GM10248 (cell line): ENCODE measurements at regions of chr12 and their contacts with region 1.

Region 1: GRCh38 chr12:84874125-84874824 is 38.3 kb downstream of the SLC6A15 start:
- DNase-seq: peak; percentile 24
- CTCF ChIP-seq: peak; percentile 70

Region 2: GRCh38 chr12:84862186-84862585 is 12.1 kb before region 1 on chr12:
- CTCF ChIA-PET with region 1: interaction called, 14 read pairs
- POLR2A ChIA-PET with region 1: no interaction called
- DNase-seq: no peak
- CTCF ChIP-seq: no peak

Region 3: DNA sequence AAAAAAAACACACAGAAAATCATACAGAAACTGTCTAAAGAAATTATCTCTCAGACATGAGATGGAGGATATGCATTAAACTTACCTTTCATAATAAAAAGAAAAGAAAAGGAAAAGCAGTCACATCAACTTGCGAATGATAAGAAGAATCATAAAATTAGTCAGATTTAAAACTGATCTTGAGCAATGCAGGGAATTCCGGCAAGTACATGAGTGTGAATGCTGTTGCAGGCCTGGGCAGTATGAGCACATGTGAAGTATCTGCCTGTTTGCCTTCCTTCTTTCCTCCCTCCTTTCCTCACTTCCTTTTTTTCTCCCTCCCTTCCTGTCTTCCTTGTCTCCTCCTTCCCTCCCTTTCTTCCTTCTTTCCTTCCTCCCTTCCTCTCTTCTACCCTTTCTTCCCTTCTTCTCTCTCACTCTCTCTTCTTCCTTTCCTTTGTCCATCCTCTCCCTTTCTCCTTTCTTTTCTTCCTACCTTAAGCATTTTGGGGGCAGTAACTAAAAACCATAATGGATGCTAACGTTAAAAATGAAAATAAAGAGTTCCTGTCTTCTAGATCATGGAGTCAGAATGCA is 76.8 kb after region 1 on chr12:
- CTCF ChIA-PET with region 1: no interaction called
- POLR2A ChIA-PET with region 1: no interaction called
- DNase-seq: no peak
- CTCF ChIP-seq: no peak

Region 4: DNA sequence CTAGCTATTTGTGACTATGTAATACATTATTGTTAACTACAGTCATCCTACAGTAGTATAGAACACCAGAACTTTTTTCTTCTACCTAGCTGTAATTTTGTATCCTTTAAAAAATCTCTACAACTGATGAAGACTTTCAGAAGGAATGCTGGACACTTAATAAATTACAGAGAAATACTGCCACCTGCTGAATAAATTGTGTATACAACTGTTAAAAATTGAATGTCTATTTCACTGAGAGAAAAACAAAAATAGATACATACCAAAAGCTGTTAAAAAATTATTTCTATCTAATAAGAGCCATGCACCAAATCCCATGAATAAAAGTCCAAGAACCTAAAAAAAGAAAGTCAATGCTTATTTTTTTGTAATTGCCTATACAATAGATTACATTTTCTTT is 155.2 kb after region 1 on chr12:
- CTCF ChIA-PET with region 1: interaction called, 159 read pairs
- POLR2A ChIA-PET with region 1: no interaction called
- DNase-seq: peak; percentile 8
- CTCF ChIP-seq: peak; percentile 40